GM12878 (cell line): ENCODE measurements at regions of chr18 and their contacts with region 1.

Region 1: GRCh38 chr18:46173393-46174341 is 69.5 kb downstream of the HAUS1 start:
- DNase-seq: peak; percentile 48
- ATAC-seq: peak; percentile 89
- H3K4me3 ChIP-seq: peak overlapping the region; percentile 91
- H3K27ac ChIP-seq: peak overlapping the region; percentile 88
- H3K4me1 ChIP-seq: peaks cover 8% of the 10 kb centered on the region
- H3K27me3 ChIP-seq: no peaks in the 10 kb centered on the region
- CTCF ChIP-seq: peak; percentile 79 to 98 (median 95)
- EP300 ChIP-seq: peak in 1 of 2 experiments; percentile 18; a peak in 1 of 4 replicates
- POLR2A ChIP-seq: peak; percentile 95
- RAD21 ChIP-seq: peak; percentile 79

Region 2: DNA sequence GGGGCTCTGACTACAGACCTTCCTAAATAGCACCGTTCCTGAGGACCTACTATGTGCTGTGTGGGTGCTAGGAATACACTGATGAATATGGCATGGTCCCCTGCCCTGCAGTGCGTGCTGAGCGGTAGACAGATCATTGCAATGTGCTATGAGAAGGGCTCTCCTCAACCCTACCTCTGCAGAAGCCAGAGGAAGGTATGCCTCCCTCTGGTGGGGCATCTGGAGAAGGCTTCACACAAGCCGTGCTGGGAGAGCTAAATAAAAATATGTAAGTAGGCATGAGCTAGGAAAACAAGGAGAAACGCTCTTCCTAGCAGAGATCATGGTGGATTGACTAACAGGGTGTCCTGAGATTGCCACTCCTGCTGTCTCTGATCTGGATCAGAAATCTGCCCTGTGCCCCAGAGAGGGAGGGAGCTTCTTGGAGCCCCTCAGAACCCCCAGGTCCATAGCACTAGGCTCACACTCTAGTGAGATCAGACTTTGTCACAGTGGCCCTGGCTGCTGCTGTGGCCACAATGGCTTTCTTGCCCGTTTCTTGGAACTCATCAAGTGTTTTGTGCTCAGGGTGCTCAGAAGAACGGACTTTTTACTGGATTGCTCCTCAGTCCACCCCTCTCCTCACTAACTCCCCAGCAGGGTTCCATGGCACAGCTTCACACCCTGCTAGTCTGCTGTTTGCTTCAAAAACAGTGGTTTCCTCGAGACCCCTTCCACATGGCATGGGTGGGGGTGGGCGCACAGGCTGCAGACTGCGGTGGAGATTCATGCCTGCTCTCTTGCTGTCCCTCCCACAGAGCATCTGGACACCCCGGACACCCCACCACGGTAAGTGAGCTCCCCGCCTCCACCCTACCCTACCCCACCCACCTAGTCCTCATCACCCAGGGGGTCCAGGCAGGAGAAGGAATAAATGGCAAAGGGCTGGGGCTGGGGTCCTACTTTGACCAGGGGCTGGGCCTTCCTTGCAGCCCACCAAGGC is 334.0 kb before region 1 on chr18:
- CTCF ChIA-PET with region 1: no interaction called
- POLR2A ChIA-PET with region 1: no interaction called
- RAD21 ChIA-PET with region 1: no interaction called
- SMC1A ChIA-PET with region 1: no interaction called
- in situ Hi-C with region 1: no loop called
- intact Hi-C with region 1: no loop called
- DNase-seq: no peak
- ATAC-seq: peak; percentile 70
- H3K4me3 ChIP-seq: no peak overlapping the region
- H3K27ac ChIP-seq: no peak overlapping the region
- H3K4me1 ChIP-seq: no peaks in the 10 kb centered on the region
- H3K27me3 ChIP-seq: peaks cover 0 to 4% of the 10 kb centered on the region in 2 experiments; a peak in 1 of 4 replicates
- CTCF ChIP-seq: peak; percentile 31 to 53 (median 44); a peak in 4 of 6 replicates
- EP300 ChIP-seq: no peak
- POLR2A ChIP-seq: no peak
- RAD21 ChIP-seq: peak; percentile 31

Region 3: GRCh38 chr18:46042571-46043123 is 131.0 kb before region 1 on chr18:
- CTCF ChIA-PET with region 1: no interaction called
- POLR2A ChIA-PET with region 1: no interaction called
- RAD21 ChIA-PET with region 1: no interaction called
- SMC1A ChIA-PET with region 1: no interaction called
- in situ Hi-C with region 1: no loop called
- intact Hi-C with region 1: no loop called
- DNase-seq: no peak
- ATAC-seq: no peak
- H3K4me3 ChIP-seq: no peak overlapping the region
- H3K27ac ChIP-seq: no peak overlapping the region
- H3K4me1 ChIP-seq: no peaks in the 10 kb centered on the region
- H3K27me3 ChIP-seq: no peaks in the 10 kb centered on the region
- CTCF ChIP-seq: no peak
- EP300 ChIP-seq: no peak
- POLR2A ChIP-seq: no peak
- RAD21 ChIP-seq: no peak

Region 4: GRCh38 chr18:46148810-46149209 is 24.9 kb before region 1 on chr18:
- CTCF ChIA-PET with region 1: interaction called, 17 read pairs
- POLR2A ChIA-PET with region 1: no interaction called
- RAD21 ChIA-PET with region 1: interaction called, 6 read pairs
- SMC1A ChIA-PET with region 1: interaction called, 5 read pairs
- in situ Hi-C with region 1: no loop called
- intact Hi-C with region 1: no loop called
- DNase-seq: no peak
- ATAC-seq: peak; percentile 88
- H3K4me3 ChIP-seq: no peak overlapping the region
- H3K27ac ChIP-seq: no peak overlapping the region
- H3K4me1 ChIP-seq: no peaks in the 10 kb centered on the region
- H3K27me3 ChIP-seq: no peaks in the 10 kb centered on the region
- CTCF ChIP-seq: peak; percentile 48 to 74 (median 67)
- EP300 ChIP-seq: no peak
- POLR2A ChIP-seq: no peak
- RAD21 ChIP-seq: peak; percentile 70

Region 5: DNA sequence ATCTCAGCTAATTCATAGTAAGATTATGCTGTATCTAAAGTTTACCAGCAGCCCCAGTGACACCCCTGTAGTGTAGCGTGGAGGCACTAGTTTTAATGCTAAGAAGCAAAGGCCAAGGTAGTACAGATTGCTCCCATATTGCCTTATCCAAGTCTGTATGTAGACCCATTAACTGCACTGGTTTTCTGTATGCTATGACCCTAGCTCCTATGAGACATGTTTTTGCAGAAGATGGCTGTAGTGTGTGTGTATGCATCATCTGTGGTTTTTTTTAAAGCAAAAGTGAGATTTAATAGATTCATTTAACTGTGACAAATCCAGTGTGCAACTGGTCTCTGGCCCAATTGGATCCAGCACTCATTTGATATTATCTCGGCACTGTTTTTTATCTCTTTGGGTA is 17.0 kb after region 1 on chr18:
- CTCF ChIA-PET with region 1: interaction called, 66 read pairs
- POLR2A ChIA-PET with region 1: no interaction called
- RAD21 ChIA-PET with region 1: interaction called, 12 read pairs
- SMC1A ChIA-PET with region 1: interaction called, 5 read pairs
- in situ Hi-C with region 1: no loop called
- intact Hi-C with region 1: no loop called
- DNase-seq: no peak
- ATAC-seq: peak; percentile 33; the same call in 2 of the 3 replicates
- H3K4me3 ChIP-seq: no peak overlapping the region
- H3K27ac ChIP-seq: no peak overlapping the region
- H3K4me1 ChIP-seq: peaks cover 14% of the 10 kb centered on the region
- H3K27me3 ChIP-seq: no peaks in the 10 kb centered on the region
- CTCF ChIP-seq: no peak
- EP300 ChIP-seq: no peak
- POLR2A ChIP-seq: no peak
- RAD21 ChIP-seq: no peak

Region 6: DNA sequence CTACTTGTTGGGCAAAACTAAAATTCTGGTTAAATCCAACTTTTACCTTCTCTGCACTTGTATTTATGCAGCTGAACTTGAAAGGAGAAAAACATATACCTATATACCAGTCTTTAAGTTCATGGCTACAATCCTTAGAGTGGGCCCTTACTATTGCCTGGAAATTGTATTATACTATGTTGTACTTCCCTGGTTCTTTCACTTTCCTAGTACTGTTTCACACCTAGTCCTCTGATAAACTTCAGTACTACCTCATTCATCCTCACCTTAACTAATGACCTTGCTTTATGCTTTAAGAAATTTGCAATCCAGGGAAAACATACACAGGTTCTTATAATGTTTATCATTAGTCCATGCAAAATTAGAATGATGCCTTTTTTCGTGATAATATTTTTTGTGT is 34.3 kb after region 1 on chr18:
- CTCF ChIA-PET with region 1: interaction called, 51 read pairs
- POLR2A ChIA-PET with region 1: no interaction called
- RAD21 ChIA-PET with region 1: interaction called, 12 read pairs
- SMC1A ChIA-PET with region 1: interaction called, 11 read pairs
- in situ Hi-C with region 1: no loop called
- intact Hi-C with region 1: loop called (anchors 1 kb)
- DNase-seq: no peak
- ATAC-seq: peak; percentile 30; the same call in 2 of the 3 replicates
- H3K4me3 ChIP-seq: no peak overlapping the region
- H3K27ac ChIP-seq: no peak overlapping the region
- H3K4me1 ChIP-seq: peaks cover 15% of the 10 kb centered on the region
- H3K27me3 ChIP-seq: no peaks in the 10 kb centered on the region
- CTCF ChIP-seq: no peak
- EP300 ChIP-seq: no peak
- POLR2A ChIP-seq: no peak
- RAD21 ChIP-seq: no peak

Region 7: DNA sequence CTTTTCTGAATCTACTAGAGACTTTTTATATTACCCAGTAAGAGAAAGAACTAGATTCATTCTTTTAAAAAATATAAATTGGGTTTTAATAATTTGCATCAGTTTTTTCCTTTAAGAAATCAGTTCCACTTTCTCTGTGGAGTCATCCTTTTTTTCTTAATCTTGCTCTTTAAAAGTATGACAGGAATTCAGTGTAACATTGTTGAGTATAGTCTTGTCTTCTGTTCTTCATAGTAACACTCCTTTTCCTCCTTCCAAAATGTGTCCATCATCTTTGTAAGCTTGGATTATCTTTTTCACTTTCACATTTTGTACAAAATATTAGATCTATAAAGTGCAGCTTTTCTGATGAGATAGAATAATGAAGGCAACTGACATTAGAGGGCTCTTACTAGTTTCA is 65.9 kb after region 1 on chr18:
- CTCF ChIA-PET with region 1: interaction called, 11 read pairs
- POLR2A ChIA-PET with region 1: no interaction called
- RAD21 ChIA-PET with region 1: no interaction called
- SMC1A ChIA-PET with region 1: interaction called, 3 read pairs
- in situ Hi-C with region 1: no loop called
- intact Hi-C with region 1: no loop called
- DNase-seq: no peak
- ATAC-seq: no peak
- H3K4me3 ChIP-seq: no peak overlapping the region
- H3K27ac ChIP-seq: no peak overlapping the region
- H3K4me1 ChIP-seq: no peaks in the 10 kb centered on the region
- H3K27me3 ChIP-seq: no peaks in the 10 kb centered on the region
- CTCF ChIP-seq: no peak
- EP300 ChIP-seq: no peak
- POLR2A ChIP-seq: no peak
- RAD21 ChIP-seq: no peak

Region 8: DNA sequence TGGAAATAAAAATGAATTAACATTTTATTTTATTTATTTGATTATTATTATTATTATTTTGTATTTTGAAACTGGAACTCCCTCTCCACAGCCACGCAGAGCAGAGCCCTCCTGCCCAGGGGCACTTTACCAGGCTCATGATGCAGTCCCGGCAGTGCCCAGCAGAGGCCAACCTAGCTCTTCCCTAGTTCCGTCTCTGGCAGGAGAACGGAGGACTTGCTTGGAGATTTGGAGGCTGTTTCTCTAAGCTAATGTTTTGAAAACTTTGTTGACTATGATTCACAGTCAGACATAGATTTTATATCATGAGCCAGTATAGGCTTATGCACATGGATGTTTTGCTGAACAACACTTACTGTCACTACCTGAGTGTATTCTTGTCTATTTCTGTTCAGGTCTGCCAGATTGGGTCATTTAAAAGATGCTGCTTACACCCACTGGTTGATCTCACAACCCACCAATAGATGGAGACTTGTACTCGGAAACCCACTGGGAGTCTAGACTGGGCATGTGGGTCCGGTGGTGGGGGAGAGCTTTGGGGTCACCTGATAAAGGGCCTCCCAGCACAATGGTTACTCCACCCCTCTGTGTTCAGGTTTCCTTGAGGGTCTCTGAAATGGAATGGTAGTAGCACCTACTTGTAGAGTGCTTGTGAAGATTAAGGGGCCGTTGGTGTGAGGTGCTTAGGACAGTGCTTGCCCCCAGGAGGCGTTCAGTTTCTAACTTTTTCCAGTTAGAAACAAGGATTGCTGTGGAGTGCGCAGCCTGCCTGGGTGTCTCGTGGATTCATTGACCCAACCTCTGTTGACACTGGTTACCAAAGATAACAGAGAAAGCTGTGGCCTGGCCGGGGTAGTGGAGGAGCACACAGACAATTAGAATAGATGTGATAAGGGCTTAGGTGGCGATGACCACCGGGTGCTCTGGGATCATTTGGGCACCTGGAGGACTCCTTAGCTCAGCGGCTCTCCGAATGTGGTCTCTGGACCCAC is 107.8 kb after region 1 on chr18:
- CTCF ChIA-PET with region 1: interaction called, 29 read pairs
- POLR2A ChIA-PET with region 1: no interaction called
- RAD21 ChIA-PET with region 1: interaction called, 5 read pairs
- SMC1A ChIA-PET with region 1: interaction called, 4 read pairs
- in situ Hi-C with region 1: no loop called
- intact Hi-C with region 1: no loop called
- DNase-seq: no peak
- ATAC-seq: peak; percentile 96
- H3K4me3 ChIP-seq: no peak overlapping the region
- H3K27ac ChIP-seq: no peak overlapping the region
- H3K4me1 ChIP-seq: no peaks in the 10 kb centered on the region
- H3K27me3 ChIP-seq: no peaks in the 10 kb centered on the region
- CTCF ChIP-seq: peak; percentile 85 to 97 (median 87)
- EP300 ChIP-seq: no peak
- POLR2A ChIP-seq: no peak
- RAD21 ChIP-seq: peak; percentile 95

Region 9: DNA sequence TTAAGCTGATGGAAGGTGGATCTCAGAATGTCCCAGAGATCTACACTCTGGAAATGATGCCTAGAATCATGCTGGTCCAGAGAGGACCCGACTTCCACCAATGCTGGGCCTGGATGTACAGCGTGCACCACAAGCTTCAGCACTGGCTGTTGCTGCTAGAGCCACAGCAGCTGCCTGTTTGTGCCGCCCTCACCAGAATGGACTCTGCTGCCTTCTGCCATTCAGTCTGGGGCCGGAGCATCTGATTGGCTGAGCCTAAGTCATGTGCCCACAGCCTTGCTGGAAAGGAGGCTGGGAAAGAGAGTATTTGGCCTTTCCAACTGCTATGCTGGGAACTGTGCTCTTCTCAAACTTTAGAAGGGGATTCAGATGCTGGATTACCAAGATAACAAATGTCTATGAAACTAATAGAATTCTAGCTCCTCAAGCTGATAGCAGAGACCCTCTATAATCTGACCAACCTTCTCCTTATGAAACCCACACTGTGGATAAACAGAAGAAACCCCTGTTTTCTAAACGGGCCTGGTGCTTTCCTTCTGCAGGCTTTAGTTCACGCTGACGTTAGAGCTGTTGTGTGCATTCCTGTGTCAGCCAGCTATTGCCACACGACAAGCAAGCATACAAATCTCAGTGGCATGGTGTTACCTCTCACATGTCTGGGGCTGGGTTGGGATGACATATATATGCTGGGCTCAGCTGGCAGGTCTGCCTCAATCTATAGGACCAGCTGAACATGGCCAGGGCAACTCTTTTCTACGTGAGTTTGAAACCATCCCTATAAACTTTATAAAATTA is 487.5 kb after region 1 on chr18:
- CTCF ChIA-PET with region 1: interaction called, 33 read pairs
- POLR2A ChIA-PET with region 1: no interaction called
- RAD21 ChIA-PET with region 1: interaction called, 17 read pairs
- SMC1A ChIA-PET with region 1: interaction called, 14 read pairs
- in situ Hi-C with region 1: no loop called
- intact Hi-C with region 1: no loop called
- DNase-seq: no peak
- ATAC-seq: no peak; the same call in 2 of the 3 replicates
- H3K4me3 ChIP-seq: no peak overlapping the region
- H3K27ac ChIP-seq: no peak overlapping the region
- H3K4me1 ChIP-seq: no peaks in the 10 kb centered on the region
- H3K27me3 ChIP-seq: 0 out of 4 replicates have a peak, but pooled peaks cover 0 to 3% of the 10 kb centered on the region in 2 experiments
- CTCF ChIP-seq: no peak
- EP300 ChIP-seq: no peak
- POLR2A ChIP-seq: no peak
- RAD21 ChIP-seq: no peak

Region 10: DNA sequence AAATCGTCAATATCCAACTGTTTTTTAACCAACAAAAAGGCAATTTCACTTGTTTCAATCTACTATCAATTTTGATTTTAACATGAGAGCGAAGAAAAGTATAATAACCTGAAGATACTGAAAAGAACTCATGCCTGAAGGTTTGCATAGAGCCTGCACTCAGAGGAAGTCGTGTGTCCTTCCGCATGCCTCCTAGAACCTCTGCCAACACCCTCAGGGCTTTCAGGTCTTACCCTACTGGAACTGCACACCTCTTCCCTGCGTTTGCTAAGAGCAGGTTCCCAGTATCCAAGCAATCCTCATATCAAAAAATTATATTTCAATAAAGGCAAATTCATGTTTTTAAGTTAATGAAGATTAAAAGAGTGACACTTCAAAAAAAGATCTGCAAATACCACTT is 668.9 kb after region 1 on chr18:
- CTCF ChIA-PET with region 1: no interaction called
- POLR2A ChIA-PET with region 1: no interaction called
- RAD21 ChIA-PET with region 1: no interaction called
- SMC1A ChIA-PET with region 1: no interaction called
- in situ Hi-C with region 1: no loop called
- intact Hi-C with region 1: no loop called
- DNase-seq: no peak
- ATAC-seq: no peak
- H3K4me3 ChIP-seq: no peak overlapping the region
- H3K27ac ChIP-seq: no peak overlapping the region
- H3K4me1 ChIP-seq: peaks cover 6% of the 10 kb centered on the region
- H3K27me3 ChIP-seq: no peaks in the 10 kb centered on the region
- CTCF ChIP-seq: no peak
- EP300 ChIP-seq: no peak
- POLR2A ChIP-seq: no peak
- RAD21 ChIP-seq: no peak

Region 11: GRCh38 chr18:48095726-48096125 is 1922.1 kb after region 1 on chr18:
- CTCF ChIA-PET with region 1: no interaction called
- POLR2A ChIA-PET with region 1: no interaction called
- RAD21 ChIA-PET with region 1: no interaction called
- SMC1A ChIA-PET with region 1: no interaction called
- in situ Hi-C with region 1: no loop called
- intact Hi-C with region 1: no loop called
- DNase-seq: no peak
- ATAC-seq: no peak
- H3K4me3 ChIP-seq: no peak overlapping the region
- H3K27ac ChIP-seq: no peak overlapping the region
- H3K4me1 ChIP-seq: no peaks in the 10 kb centered on the region
- H3K27me3 ChIP-seq: peaks cover 0 to 3% of the 10 kb centered on the region in 2 experiments; a peak in 3 of 4 replicates
- CTCF ChIP-seq: no peak
- EP300 ChIP-seq: no peak
- POLR2A ChIP-seq: no peak
- RAD21 ChIP-seq: no peak